ENCODE measurements at regions of chr17 and their contacts with region 1.

Region 1: GRCh38 chr17:56708220-56708558 is 114.7 kb downstream of the NOG start:
- DNase-seq: no peak
- ATAC-seq: no peak
- H3K4me3 ChIP-seq: no peak overlapping the region
- H3K4me3 Mint-ChIP-seq: no peak overlapping the region
- H3K27ac ChIP-seq: no peak overlapping the region
- H3K27ac Mint-ChIP-seq: no peak overlapping the region
- H3K4me1 ChIP-seq: no peaks in the 10 kb centered on the region
- H3K4me1 Mint-ChIP-seq: no peaks in the 10 kb centered on the region
- H3K27me3 ChIP-seq: peaks cover 0 to 20% of the 10 kb centered on the region in 2 experiments
- H3K27me3 Mint-ChIP-seq: peaks cover 9 to 13% of the 10 kb centered on the region in 2 donors

Region 2: GRCh38 chr17:56737366-56738161 is 29.4 kb after region 1 on chr17:
- CTCF ChIA-PET with region 1: interaction called in 1 of 2 experiments, 10 read pairs
- POLR2A ChIA-PET with region 1: no interaction called
- DNase-seq: peak in 3 of 35 experiments; percentile 4 to 10 (median 10)
- ATAC-seq: peak in 1 of 4 experiments; percentile 29
- H3K4me3 ChIP-seq: no peak overlapping the region
- H3K4me3 Mint-ChIP-seq: no peak overlapping the region
- H3K27ac ChIP-seq: no peak overlapping the region
- H3K27ac Mint-ChIP-seq: no peak overlapping the region
- H3K4me1 ChIP-seq: no peaks in the 10 kb centered on the region
- H3K4me1 Mint-ChIP-seq: no peaks in the 10 kb centered on the region
- H3K27me3 ChIP-seq: peaks cover 0 to 12% of the 10 kb centered on the region in 2 experiments
- H3K27me3 Mint-ChIP-seq: peaks cover 5 to 6% of the 10 kb centered on the region in 2 donors

Measured in T-cell (primary cell).